GM10248 (cell line): ENCODE measurements at regions of chr2 and their contacts with region 1.

Region 1: DNA sequence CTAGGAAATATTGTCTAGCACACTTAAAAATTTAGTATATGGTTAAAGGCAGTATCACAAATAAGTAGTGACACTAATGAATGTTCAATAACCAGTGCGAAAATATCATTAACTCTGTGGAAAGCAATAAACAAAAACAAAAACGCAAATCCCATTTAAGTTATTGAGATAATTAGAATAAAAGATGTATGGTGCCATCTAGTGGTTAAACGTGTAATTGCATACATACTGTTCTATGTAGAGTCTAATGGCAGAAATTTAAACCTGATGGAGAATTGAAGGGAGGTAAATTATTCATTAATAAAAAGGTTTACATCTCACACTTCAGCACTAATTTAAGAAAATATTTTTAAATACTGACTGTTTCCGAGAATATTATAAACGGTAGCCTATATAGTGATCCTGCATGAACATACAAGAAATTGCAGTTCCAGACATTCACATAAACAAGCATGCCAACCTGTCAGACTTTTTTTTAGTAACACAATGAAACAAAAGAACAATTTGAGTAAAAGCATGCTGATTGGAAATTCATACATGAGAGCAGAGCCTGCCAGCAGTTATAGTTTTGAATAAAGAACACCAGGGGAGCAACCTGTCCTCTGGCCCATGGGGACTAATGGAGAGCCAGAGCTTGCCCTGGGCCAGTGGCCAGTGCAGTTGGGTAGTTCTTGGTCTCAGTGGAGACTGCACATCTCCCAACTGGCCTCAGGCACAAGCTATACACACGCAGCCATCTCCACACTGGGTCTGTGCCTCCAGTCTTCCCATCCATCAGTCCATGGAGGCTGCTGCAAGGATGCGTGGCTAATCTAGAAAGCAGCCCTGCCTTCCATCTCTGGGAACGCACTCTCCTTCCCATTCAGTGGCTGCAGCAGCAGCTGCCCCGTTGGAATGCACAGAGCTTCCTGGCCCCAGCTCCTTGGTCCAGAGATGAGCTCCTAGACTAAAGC is 28.0 kb downstream of the GCG start:
- DNase-seq: peak; percentile 47
- CTCF ChIP-seq: peak; percentile 72

Region 2: GRCh38 chr2:161946489-161947107 is 177.5 kb before region 1 on chr2:
- CTCF ChIA-PET with region 1: interaction called, 11 read pairs
- POLR2A ChIA-PET with region 1: no interaction called
- DNase-seq: no peak
- CTCF ChIP-seq: peak; percentile 47

Region 3: DNA sequence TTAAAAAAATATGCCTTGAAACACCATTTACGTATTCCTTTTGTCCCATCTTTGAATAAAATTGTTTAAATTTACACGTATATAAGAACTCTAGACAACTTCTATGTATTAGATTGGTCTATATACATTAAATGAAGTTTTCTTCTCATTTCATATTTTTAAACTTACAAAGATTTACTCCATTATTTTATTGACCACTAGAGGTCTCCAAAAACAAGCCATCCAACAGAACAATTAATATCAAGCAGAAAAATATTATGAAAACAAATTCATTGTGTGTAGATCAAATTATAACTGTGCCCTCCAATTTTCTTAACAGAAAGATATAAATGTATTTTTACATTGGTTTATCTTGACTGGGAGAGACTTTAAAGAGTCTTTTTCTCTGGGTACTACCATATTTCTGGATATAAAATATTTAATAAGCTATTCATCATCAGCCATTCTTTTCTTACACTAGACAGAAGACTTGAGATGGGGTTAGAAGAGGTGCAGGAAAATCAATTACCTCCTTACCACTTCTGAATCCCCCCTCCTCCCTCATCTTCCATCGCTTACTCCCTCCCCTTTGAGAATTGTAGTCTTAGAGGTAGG is 116.5 kb before region 1 on chr2:
- CTCF ChIA-PET with region 1: interaction called, 39 read pairs
- POLR2A ChIA-PET with region 1: no interaction called
- DNase-seq: no peak
- CTCF ChIP-seq: peak; percentile 35

Region 4: DNA sequence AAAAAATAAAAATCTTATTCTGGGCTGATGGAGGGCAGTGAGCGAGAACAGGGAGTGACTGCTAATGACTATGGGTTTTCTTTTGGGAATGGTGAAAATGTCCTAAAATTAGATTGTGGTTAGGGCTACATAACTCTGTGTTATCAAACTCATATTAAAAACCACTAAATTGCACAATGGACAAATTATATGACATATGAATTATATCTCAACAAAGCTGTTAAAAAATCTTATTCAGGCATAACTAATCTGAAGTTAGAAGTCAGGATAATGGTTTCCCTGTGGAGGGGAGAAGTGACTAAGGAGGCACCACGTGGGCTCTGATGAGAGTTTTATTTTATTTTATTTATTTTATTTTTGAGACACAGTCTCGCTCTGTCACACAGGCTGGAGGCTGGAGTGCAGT is 17.9 kb before region 1 on chr2:
- CTCF ChIA-PET with region 1: interaction called, 11 read pairs
- POLR2A ChIA-PET with region 1: no interaction called
- DNase-seq: no peak
- CTCF ChIP-seq: no peak